ENCODE measurements at regions of chr2 and their contacts with region 1.

Region 1: GRCh38 chr2:191811807-191812602 is 34.9 kb downstream of the CAVIN2 start:
- DNase-seq: peak; percentile 58 to 70
- H3K4me3 ChIP-seq: no peak overlapping the region
- H3K4me3 Mint-ChIP-seq: no peak overlapping the region
- H3K27ac Mint-ChIP-seq: no peak overlapping the region
- H3K4me1 ChIP-seq: no peaks in the 10 kb centered on the region
- H3K4me1 Mint-ChIP-seq: no peaks in the 10 kb centered on the region
- H3K27me3 ChIP-seq: no peaks in the 10 kb centered on the region
- H3K27me3 Mint-ChIP-seq: no peaks in the 10 kb centered on the region
- CTCF ChIP-seq: peak; percentile 79 to 82

Region 2: GRCh38 chr2:191758518-191759507 is 53.2 kb before region 1 on chr2:
- CTCF ChIA-PET with region 1: interaction called, 5 read pairs
- POLR2A ChIA-PET with region 1: no interaction called
- intact Hi-C with region 1: loop called (anchors 2 kb)
- DNase-seq: peak; percentile 75 to 77
- H3K4me3 ChIP-seq: no peak overlapping the region
- H3K4me3 Mint-ChIP-seq: no peak overlapping the region
- H3K27ac Mint-ChIP-seq: no peak overlapping the region
- H3K4me1 ChIP-seq: 0 out of 2 replicates have a peak, but pooled peaks cover 6% of the 10 kb centered on the region
- H3K4me1 Mint-ChIP-seq: no peaks in the 10 kb centered on the region
- H3K27me3 ChIP-seq: no peaks in the 10 kb centered on the region
- H3K27me3 Mint-ChIP-seq: no peaks in the 10 kb centered on the region
- CTCF ChIP-seq: peak; percentile 63 to 89

Region 3: DNA sequence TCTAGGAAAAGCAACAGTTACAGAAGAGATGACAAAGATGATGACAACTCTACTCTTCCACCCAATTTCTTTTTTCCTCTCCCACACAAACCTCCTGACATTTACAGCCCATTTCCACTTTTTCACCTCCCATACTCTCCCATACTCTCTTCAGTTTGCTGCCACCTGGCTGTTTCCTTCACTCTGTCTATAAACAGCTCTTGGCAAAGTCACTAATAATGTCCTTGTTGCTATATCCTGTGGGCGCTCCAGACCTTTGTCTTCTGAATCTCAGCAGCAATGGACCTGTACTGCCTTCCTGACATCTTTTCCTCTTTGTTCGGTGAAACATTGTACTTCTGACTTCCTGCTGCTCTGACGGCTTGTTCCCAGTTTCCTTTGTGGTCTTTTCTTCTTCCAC is 95.5 kb after region 1 on chr2:
- CTCF ChIA-PET with region 1: interaction called, 5 read pairs
- POLR2A ChIA-PET with region 1: no interaction called
- intact Hi-C with region 1: loop called (anchors 1 kb)
- DNase-seq: peak in 1 of 2 experiments; percentile 14
- H3K4me3 ChIP-seq: no peak overlapping the region
- H3K4me3 Mint-ChIP-seq: no peak overlapping the region
- H3K27ac Mint-ChIP-seq: no peak overlapping the region
- H3K4me1 ChIP-seq: no peaks in the 10 kb centered on the region
- H3K4me1 Mint-ChIP-seq: no peaks in the 10 kb centered on the region
- H3K27me3 ChIP-seq: no peaks in the 10 kb centered on the region
- H3K27me3 Mint-ChIP-seq: no peaks in the 10 kb centered on the region
- CTCF ChIP-seq: peak in 1 of 2 experiments; percentile 36

Region 4: DNA sequence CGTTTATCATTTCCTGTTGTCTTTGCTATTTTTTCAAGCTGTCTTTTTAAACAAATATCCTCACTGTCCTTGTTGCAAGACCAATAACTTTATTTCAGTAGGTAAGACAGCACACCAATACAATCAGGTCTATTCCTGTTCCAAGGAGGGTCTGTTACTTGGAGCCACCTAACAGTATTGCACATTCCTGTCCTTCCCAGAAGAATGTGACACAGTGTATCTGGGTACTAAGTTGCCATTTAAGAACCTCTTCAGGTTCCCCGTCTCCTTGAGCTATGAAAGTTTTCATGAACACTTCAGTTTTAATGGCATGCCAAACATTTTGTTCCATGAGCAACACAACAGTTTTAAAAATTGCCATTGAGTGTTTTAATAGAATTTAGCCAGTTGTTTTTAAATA is 173.7 kb after region 1 on chr2:
- CTCF ChIA-PET with region 1: no interaction called
- POLR2A ChIA-PET with region 1: no interaction called
- intact Hi-C with region 1: loop called (anchors 5 kb)
- DNase-seq: no peak
- H3K4me3 ChIP-seq: no peak overlapping the region
- H3K4me3 Mint-ChIP-seq: no peak overlapping the region
- H3K27ac Mint-ChIP-seq: no peak overlapping the region
- H3K4me1 ChIP-seq: no peaks in the 10 kb centered on the region
- H3K4me1 Mint-ChIP-seq: no peaks in the 10 kb centered on the region
- H3K27me3 ChIP-seq: no peaks in the 10 kb centered on the region
- H3K27me3 Mint-ChIP-seq: no peaks in the 10 kb centered on the region
- CTCF ChIP-seq: no peak

Region 5: DNA sequence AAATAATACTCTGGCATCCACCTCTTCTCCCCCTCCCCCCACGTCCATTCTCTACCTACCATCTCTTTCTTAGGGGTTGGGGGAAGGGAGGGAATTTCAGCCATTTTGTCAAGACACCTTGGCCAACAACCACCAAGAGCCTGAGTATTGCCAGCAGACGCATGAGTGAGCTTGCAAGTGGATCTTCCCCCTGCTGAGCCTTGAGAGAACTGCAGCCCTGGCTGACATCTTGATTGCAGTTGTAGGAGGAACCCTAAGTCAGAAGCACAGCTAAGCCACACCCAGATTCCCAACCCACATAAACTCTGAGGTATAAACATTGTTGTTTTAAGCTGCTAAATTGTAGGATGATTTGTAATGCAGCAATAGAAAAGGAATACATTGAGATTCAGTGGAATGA is 217.1 kb after region 1 on chr2:
- CTCF ChIA-PET with region 1: no interaction called
- POLR2A ChIA-PET with region 1: no interaction called
- intact Hi-C with region 1: loop called (anchors 1 kb)
- DNase-seq: peak; percentile 56 to 58
- H3K4me3 ChIP-seq: no peak overlapping the region
- H3K4me3 Mint-ChIP-seq: no peak overlapping the region
- H3K27ac Mint-ChIP-seq: no peak overlapping the region
- H3K4me1 ChIP-seq: no peaks in the 10 kb centered on the region
- H3K4me1 Mint-ChIP-seq: no peaks in the 10 kb centered on the region
- H3K27me3 ChIP-seq: no peaks in the 10 kb centered on the region
- H3K27me3 Mint-ChIP-seq: peaks cover 4% of the 10 kb centered on the region
- CTCF ChIP-seq: peak; percentile 38 to 42

Region 6: GRCh38 chr2:192286093-192286701 is 474.2 kb after region 1 on chr2:
- CTCF ChIA-PET with region 1: no interaction called
- POLR2A ChIA-PET with region 1: no interaction called
- intact Hi-C with region 1: loop called (anchors 1 kb)
- DNase-seq: peak in 1 of 2 experiments; percentile 12
- H3K4me3 ChIP-seq: no peak overlapping the region
- H3K4me3 Mint-ChIP-seq: no peak overlapping the region
- H3K27ac Mint-ChIP-seq: no peak overlapping the region
- H3K4me1 ChIP-seq: no peaks in the 10 kb centered on the region
- H3K4me1 Mint-ChIP-seq: no peaks in the 10 kb centered on the region
- H3K27me3 ChIP-seq: no peaks in the 10 kb centered on the region
- H3K27me3 Mint-ChIP-seq: no peaks in the 10 kb centered on the region
- CTCF ChIP-seq: peak; percentile 10 to 22

Measured in Caco-2 (cell line).